Activated CD4-positive, alpha-beta T cell treated with anti-CD3 and anti-CD28 coated beads, Interleukin-2, amount 10 ng/mL, durations not matched to agents 24 days and 14 days (primary cell): ENCODE measurements at regions of chr9 and their contacts with region 1.

Region 1: DNA sequence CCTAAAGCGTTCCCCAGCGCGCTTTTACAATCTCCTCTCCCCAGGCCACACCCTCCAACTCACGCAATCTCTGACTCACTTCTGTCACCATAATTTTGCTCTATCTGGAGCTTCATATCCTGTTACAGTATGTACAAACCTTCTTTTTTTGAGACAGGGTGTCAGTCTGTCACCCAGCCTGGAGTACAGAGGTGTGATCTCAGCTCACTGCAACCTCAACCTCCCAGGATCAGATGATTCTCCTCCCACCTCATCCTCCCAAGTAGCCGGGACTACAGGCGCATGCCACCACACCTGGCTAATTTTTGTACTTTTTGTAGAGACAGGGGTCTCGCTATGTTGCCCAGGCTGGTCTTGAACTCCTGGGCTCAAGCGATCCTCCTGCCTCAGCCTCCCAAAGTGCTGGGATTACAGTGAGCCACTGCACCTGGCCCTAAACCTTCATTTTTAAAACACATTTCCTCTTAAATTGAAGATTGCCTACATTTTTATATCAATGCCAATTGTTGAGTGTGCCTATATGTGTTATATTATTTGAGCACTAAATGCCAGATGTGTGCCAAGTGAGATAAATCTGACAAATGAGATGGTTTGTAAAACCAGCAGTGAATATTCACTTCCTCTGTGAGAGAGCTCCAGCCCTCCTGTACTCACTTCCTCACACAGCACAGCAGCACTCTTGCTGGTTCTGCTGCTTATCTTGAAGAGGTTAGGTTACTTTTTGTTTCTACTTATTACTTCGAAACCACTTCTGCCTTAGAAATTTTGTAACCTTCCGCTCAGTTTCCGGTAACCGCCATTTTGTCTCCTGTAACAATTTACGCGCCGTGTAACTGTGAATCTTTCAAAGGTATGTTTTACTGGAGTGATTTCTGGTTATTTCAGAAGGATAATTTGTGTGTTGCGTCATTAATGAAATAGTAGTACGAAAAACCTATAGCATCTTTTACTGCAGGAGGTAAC is 57.9 kb downstream of the DOCK8 start:
- DNase-seq: peak; percentile 93
- H3K4me3 Mint-ChIP-seq: peak overlapping the region; percentile 94
- H3K27ac Mint-ChIP-seq: peak overlapping the region; percentile 99
- H3K4me1 Mint-ChIP-seq: peaks cover 46% of the 10 kb centered on the region
- H3K27me3 Mint-ChIP-seq: no peaks in the 10 kb centered on the region

Region 2: DNA sequence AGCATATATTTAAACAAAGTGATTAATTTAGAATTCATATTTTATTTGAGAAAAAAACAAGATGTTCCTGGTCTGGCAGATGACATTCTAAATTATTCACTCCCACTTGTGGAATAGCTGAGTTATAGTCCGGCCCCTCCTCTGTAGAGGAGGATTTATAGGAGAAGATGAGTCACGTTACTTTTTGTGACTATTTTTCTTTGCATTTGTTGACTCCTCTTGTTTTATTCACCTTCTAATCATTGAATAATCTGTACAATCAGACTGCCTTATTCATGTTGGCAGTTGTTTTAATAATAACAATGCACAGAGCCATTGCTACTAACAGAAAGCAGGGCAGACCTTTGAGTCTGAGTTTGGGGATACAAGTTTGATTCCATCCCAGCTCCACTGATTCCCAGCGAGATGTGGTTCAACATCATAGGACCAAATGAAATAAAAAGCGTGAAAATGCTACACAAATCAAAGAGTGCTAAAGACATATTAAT is 34.6 kb before region 1 on chr9:
- intact Hi-C with region 1: loop called (anchors 5 kb)
- DNase-seq: peak; percentile 50
- H3K4me3 Mint-ChIP-seq: peak overlapping the region; percentile 73
- H3K27ac Mint-ChIP-seq: peak overlapping the region; percentile 35
- H3K4me1 Mint-ChIP-seq: peaks cover 37% of the 10 kb centered on the region
- H3K27me3 Mint-ChIP-seq: peaks cover 4% of the 10 kb centered on the region

Region 3: GRCh38 chr9:249025-249424 is 23.5 kb before region 1 on chr9:
- intact Hi-C with region 1: loop called (anchors 2 kb)
- DNase-seq: peak; percentile 78
- H3K4me3 Mint-ChIP-seq: peak overlapping the region; percentile 49
- H3K27ac Mint-ChIP-seq: peak overlapping the region; percentile 26
- H3K4me1 Mint-ChIP-seq: peaks cover 27% of the 10 kb centered on the region
- H3K27me3 Mint-ChIP-seq: peaks cover 2% of the 10 kb centered on the region